GM12878 (cell line): ENCODE measurements at regions of chr1 and their contacts with region 1.

Region 1: GRCh38 chr1:202315576-202316168 is 26.1 kb downstream of the UBE2T start:
- DNase-seq: peak; percentile 19
- ATAC-seq: peak; percentile 97
- H3K4me3 ChIP-seq: no peak overlapping the region
- H3K27ac ChIP-seq: no peak overlapping the region
- H3K4me1 ChIP-seq: no peaks in the 10 kb centered on the region
- H3K27me3 ChIP-seq: peaks cover 0 to 1% of the 10 kb centered on the region in 2 experiments; a peak in 1 of 4 replicates
- CTCF ChIP-seq: peak; percentile 97 to 99 (median 98); a peak in 5 of 6 replicates
- EP300 ChIP-seq: no peak
- POLR2A ChIP-seq: no peak
- RAD21 ChIP-seq: peak; percentile 93

Region 2: GRCh38 chr1:202160377-202160940 is 155.2 kb before region 1 on chr1 and contains the start of gene PTPN7:
- CTCF ChIA-PET with region 1: interaction called, 17 read pairs
- POLR2A ChIA-PET with region 1: no interaction called
- RAD21 ChIA-PET with region 1: interaction called, 3 read pairs
- SMC1A ChIA-PET with region 1: interaction called, 10 read pairs
- in situ Hi-C with region 1: no loop called
- intact Hi-C with region 1: no loop called
- DNase-seq: peak; percentile 48
- ATAC-seq: peak; percentile 67
- H3K4me3 ChIP-seq: peak within 1 kb of the TSS; percentile 85
- H3K27ac ChIP-seq: peak within 1 kb of the TSS; percentile 97
- H3K4me1 ChIP-seq: peaks cover 58% of the 10 kb centered on the region
- H3K27me3 ChIP-seq: no peaks in the 10 kb centered on the region
- CTCF ChIP-seq: peak; percentile 55 to 79 (median 66)
- EP300 ChIP-seq: no peak
- POLR2A ChIP-seq: peak; percentile 51
- RAD21 ChIP-seq: peak; percentile 42; the same call in 1 of the 2 replicates
- polyA plus RNA-seq, gene PTPN7: 7.9 to 14.2 TPM

Region 3: GRCh38 chr1:202192770-202193613 is 122.7 kb before region 1 on chr1:
- CTCF ChIA-PET with region 1: interaction called, 52 read pairs
- POLR2A ChIA-PET with region 1: no interaction called
- RAD21 ChIA-PET with region 1: interaction called, 39 read pairs
- SMC1A ChIA-PET with region 1: interaction called, 23 read pairs
- in situ Hi-C with region 1: loop called (anchors 5 kb)
- intact Hi-C with region 1: loop called (anchors 1 kb)
- DNase-seq: no peak
- ATAC-seq: peak; percentile 80
- H3K4me3 ChIP-seq: no peak overlapping the region
- H3K27ac ChIP-seq: no peak overlapping the region
- H3K4me1 ChIP-seq: no peaks in the 10 kb centered on the region
- H3K27me3 ChIP-seq: peaks cover 7 to 11% of the 10 kb centered on the region in 2 experiments
- CTCF ChIP-seq: peak; percentile 81 to 95 (median 86)
- EP300 ChIP-seq: no peak
- POLR2A ChIP-seq: no peak
- RAD21 ChIP-seq: peak; percentile 71

Region 4: DNA sequence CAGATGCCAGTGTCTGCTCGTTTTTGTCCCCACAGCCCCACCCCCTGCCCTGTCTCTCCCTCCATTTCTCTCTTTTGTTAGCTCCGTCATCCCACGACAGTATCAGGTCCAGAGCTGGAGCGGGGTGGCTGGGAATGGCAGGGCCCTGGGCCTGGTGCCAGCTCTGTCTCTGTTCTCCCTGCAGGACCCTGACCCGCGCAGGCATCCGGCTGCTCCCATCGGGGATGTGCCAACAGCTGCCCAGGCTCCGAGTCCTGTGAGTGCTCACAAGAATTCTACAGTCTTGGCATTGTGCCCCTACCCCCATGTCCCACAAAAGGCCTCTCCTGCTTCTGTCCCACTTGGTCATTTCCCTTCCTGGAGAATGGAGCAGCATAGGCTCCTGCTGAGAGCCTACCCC is 11.3 kb before region 1 on chr1:
- CTCF ChIA-PET with region 1: interaction called, 21 read pairs
- POLR2A ChIA-PET with region 1: no interaction called
- RAD21 ChIA-PET with region 1: no interaction called
- SMC1A ChIA-PET with region 1: interaction called, 5 read pairs
- in situ Hi-C with region 1: no loop called
- intact Hi-C with region 1: no loop called
- DNase-seq: no peak
- ATAC-seq: no peak
- H3K4me3 ChIP-seq: no peak overlapping the region
- H3K27ac ChIP-seq: no peak overlapping the region
- H3K4me1 ChIP-seq: no peaks in the 10 kb centered on the region
- H3K27me3 ChIP-seq: peaks cover 0 to 2% of the 10 kb centered on the region in 2 experiments; a peak in 2 of 4 replicates
- CTCF ChIP-seq: no peak
- EP300 ChIP-seq: no peak
- POLR2A ChIP-seq: no peak
- RAD21 ChIP-seq: no peak

Region 5: DNA sequence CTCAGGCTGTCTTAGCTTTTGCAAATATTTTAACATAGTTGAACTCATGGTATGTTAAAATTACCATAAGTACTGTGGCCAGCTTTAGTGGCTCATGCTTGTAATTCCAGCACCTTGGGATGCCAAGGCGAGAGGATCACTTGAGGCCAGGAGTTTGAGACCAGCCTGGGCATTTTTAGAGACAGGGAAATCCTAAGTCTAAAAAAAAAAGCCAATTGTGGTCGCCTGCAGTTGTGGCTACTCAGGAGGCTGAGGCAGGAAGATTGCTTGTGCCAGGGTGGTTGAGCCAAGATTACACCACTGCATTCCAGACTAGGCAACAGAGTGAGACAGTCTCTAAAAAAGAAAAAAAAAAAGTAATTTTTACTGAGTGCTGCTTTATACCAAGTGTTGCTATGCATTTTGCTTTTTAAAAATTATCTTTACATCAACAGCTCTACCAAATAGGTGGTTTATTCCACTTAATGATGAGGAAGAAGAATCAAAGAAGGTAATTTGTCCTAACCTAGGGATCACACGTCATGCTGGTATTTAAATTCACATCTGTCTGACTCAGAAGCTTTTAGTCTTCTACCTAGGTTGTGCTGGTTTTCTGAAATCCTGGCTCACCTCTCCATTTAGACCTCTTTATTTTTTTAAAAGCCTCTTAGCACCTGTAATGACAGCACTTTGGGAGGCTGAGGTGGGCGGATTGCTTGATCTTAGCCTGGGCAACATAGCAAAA is 49.6 kb after region 1 on chr1:
- CTCF ChIA-PET with region 1: no interaction called
- POLR2A ChIA-PET with region 1: no interaction called
- RAD21 ChIA-PET with region 1: no interaction called
- SMC1A ChIA-PET with region 1: no interaction called
- in situ Hi-C with region 1: no loop called
- intact Hi-C with region 1: no loop called
- DNase-seq: no peak
- ATAC-seq: no peak
- H3K4me3 ChIP-seq: no peak overlapping the region
- H3K27ac ChIP-seq: no peak overlapping the region
- H3K4me1 ChIP-seq: no peaks in the 10 kb centered on the region
- H3K27me3 ChIP-seq: no peaks in the 10 kb centered on the region
- CTCF ChIP-seq: no peak
- EP300 ChIP-seq: no peak
- POLR2A ChIP-seq: no peak
- RAD21 ChIP-seq: no peak